ENCODE measurements at regions of chr6 and their contacts with region 1.

Region 1: DNA sequence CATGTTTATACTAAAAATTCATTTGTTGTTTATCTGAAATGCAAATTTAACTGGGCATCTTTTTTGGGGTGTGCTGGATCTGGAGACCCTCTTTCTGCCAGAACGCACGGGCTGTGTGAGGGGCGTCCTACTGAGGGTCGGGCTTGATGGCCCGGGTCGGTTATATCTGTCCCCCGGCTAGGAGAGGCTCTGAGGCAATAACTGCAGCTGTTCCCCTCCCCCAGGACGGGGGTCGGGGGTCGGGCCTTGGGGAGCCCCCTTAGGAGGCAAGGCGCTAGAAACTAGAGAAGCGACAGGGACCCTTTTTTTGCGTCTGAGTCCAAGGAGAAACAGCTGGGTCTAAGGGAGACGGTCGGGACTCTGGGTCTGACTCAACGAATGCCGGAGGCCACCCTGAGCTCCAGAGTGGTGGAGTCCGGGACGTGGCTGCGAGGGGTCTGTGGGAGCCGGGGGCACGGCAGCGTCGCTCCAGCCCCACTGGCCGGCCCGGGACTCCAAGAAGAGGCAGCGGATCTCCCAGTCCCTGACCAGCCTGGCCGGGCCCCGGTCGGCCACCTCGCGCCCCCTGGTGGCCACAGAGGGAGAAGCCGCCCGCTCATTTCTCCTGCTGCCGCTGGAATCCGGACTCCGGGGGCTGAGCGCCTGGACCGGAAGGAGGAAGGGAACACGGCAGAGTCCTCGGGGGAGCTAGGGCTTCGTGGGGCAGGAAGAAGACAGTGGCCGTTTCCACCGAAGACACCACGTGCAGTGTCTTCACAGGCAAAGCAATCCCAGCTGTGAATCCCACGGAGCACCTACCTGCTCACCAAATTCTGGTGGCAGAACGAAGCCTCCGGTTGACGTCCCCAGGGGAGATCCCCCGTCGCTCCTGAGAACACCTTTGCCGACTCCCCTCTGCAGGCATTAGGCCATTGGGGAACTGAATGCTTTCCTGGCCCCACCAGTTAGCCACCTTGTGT is 24.0 kb upstream of the SCML4 start:
- DNase-seq: peak; percentile 66 to 88 (median 76)
- ATAC-seq: peak; percentile 80
- H3K4me3 ChIP-seq: peak overlapping the region; percentile 61
- H3K4me3 Mint-ChIP-seq: peak overlapping the region; percentile 88
- H3K27ac ChIP-seq: no peak overlapping the region
- H3K27ac Mint-ChIP-seq: peak overlapping the region; percentile 83
- H3K4me1 ChIP-seq: peaks cover 22% of the 10 kb centered on the region
- H3K4me1 Mint-ChIP-seq: peaks cover 30% of the 10 kb centered on the region
- H3K27me3 ChIP-seq: no peaks in the 10 kb centered on the region
- H3K27me3 Mint-ChIP-seq: no peaks in the 10 kb centered on the region
- CTCF ChIP-seq: peak; percentile 96

Region 2: DNA sequence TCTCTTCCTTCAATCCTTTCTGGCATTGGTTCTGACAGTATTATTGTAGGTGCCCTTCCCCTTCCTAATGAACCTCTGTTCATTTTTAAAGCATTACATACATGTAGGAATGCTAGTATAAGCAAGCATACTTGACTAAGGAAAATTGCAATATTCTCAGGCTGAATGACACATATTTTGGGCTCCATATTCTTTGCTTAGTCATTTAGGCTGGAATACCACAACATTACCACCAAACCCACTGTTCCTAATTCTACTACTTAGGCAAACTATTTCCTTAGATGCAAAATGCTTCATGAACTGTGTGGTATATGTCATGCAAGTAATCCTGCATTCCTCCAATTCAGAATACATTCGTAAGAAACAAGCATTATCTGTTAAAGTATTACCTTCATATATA is 1648.1 kb before region 1 on chr6:
- CTCF ChIA-PET with region 1: no interaction called
- POLR2A ChIA-PET with region 1: no interaction called
- intact Hi-C with region 1: no loop called
- DNase-seq: no peak
- ATAC-seq: no peak
- H3K4me3 ChIP-seq: no peak overlapping the region
- H3K4me3 Mint-ChIP-seq: no peak overlapping the region
- H3K27ac ChIP-seq: no peak overlapping the region
- H3K27ac Mint-ChIP-seq: no peak overlapping the region
- H3K4me1 ChIP-seq: peaks cover 14% of the 10 kb centered on the region
- H3K4me1 Mint-ChIP-seq: peaks cover 35% of the 10 kb centered on the region
- H3K27me3 ChIP-seq: no peaks in the 10 kb centered on the region
- H3K27me3 Mint-ChIP-seq: no peaks in the 10 kb centered on the region
- CTCF ChIP-seq: no peak

Region 3: DNA sequence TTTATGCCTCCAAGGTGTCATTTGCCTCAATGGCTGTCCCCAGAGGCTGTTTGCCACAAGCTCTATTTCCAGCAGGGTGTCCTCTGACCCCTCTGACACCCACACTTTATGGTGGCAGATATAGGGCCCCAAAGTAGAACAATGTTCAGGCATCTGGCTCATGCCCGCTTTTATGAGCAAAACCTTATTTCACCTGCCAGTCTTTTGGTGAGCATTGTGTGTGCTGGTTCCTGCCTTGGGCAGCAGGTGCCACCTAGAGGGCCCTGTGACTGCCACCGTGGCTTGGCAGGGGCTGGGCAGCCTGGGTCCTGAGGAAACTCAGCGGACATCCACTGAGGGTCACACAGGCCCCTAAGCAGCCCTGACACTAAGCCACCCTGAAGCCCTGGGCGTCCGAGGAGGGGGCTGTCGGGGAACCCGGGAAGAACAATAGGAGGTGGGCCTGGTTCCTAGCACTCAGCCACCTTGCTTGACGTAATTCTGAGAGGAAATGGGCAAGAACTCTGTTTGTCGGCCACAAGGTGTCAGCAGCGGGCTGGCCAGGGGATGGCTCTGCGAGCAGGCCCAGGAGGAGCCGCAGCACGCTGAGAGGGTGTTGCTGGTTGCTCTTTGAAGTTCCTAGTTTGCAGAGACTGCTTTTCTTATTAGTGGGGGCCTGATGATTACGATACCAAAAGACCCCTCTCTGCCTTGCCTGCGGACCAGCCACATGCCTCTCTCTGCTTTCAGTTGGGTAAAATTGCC is 173.0 kb before region 1 on chr6:
- CTCF ChIA-PET with region 1: interaction called, 18 read pairs
- POLR2A ChIA-PET with region 1: interaction called, 4 read pairs
- intact Hi-C with region 1: loop called (anchors 1 kb)
- DNase-seq: peak; percentile 80 to 93 (median 86)
- ATAC-seq: peak; percentile 98
- H3K4me3 ChIP-seq: peak overlapping the region; percentile 18
- H3K4me3 Mint-ChIP-seq: peak overlapping the region; percentile 68
- H3K27ac ChIP-seq: peak overlapping the region in 1 of 2 donors; percentile 18
- H3K27ac Mint-ChIP-seq: peak overlapping the region; percentile 83
- H3K4me1 ChIP-seq: peaks cover 18% of the 10 kb centered on the region
- H3K4me1 Mint-ChIP-seq: peaks cover 14% of the 10 kb centered on the region
- H3K27me3 ChIP-seq: no peaks in the 10 kb centered on the region
- H3K27me3 Mint-ChIP-seq: no peaks in the 10 kb centered on the region
- CTCF ChIP-seq: peak; percentile 90

Region 4: DNA sequence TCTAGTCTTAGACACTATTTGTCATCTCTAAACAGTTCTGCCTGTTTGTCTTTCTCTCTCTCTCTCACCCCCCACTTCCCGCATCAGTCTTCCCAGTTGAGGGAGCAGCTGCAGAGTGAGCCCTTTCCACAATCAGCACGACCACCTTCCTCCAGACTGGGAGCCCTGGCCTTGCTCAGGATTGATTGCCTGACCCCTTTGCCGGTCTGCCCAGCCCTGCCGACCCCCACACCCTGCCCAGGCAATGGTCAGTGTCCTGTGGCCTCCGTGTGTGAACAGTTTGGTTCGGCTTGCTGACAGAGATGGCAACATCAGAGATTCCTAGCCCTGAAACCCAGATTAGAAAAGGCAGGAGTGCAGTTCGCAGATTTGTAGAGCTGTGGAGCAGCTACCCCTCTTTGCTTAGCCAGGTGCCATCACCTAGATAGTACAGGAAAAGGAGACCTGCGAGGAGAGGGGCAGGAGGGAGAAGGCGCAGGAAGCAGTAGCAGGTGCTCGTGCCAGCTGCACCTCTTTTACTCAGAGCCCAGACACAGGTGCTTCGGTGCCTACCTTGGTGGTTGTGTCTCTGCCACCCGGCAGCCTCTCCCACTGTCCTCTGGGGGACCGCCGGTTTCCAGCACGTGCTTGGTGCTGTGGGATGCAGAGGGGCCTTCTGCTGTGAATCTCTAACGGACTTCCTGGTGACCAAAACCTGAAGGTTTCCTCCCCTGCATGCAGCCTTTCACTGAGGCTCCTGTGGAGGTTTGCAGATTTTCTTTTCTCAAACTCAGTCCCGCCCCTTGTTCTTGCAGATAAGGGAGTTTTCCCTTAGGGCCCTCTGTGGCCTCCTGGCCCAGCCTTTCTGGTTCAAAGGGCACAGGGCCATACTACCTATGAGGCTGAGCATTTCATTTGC is 116.5 kb before region 1 on chr6:
- CTCF ChIA-PET with region 1: interaction called, 84 read pairs
- POLR2A ChIA-PET with region 1: interaction called, 31 read pairs
- intact Hi-C with region 1: loop called (anchors 1 kb)
- DNase-seq: peak in 12 of 14 experiments; percentile 25 to 68 (median 50)
- ATAC-seq: peak; percentile 58
- H3K4me3 ChIP-seq: peak overlapping the region; percentile 84
- H3K4me3 Mint-ChIP-seq: peak overlapping the region; percentile 94
- H3K27ac ChIP-seq: peak overlapping the region; percentile 59 to 79
- H3K27ac Mint-ChIP-seq: peak overlapping the region; percentile 93
- H3K4me1 ChIP-seq: peaks cover 81% of the 10 kb centered on the region
- H3K4me1 Mint-ChIP-seq: peaks cover 94% of the 10 kb centered on the region
- H3K27me3 ChIP-seq: no peaks in the 10 kb centered on the region
- H3K27me3 Mint-ChIP-seq: no peaks in the 10 kb centered on the region
- CTCF ChIP-seq: no peak

Region 5: DNA sequence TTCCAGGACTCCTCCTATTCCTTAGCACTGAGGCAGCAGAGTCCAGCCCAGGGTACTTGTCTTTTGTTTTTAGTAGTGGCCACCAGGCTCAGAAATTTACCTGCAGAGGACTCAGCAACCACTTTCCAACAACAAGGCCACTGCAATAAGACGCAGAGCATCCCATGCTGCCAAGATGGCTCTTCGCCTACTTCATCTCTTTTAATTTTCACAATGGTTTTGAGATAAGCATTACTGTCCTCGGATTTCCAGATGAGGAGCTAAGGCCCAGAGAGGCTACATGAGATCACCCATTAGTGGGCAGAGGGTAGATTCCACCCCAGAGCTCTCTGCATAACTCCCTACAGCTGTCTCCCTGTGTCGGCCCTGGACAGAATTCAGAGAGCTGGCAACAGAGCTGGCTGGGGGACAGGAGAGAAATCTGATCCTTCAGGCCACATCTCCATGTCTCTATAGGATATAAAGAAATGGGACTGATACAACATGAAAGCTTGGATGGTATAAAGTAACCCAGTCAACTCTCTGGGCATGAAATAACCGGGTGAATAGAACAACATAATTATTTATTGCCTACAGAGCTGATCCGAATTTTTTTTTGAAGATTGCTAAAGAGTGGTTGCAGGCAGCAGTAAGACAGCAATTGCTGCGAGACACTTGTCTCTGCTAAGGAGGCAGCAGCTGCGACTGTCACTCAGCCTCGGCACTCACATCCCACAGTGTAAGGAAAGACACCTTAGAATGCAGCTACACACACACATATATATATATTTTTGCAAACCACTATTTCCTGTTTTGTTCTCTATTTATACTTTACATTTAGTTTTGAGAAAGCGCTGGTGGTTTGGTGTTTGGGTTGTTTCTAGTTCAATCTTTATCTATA is 61.2 kb before region 1 on chr6:
- CTCF ChIA-PET with region 1: interaction called, 7 read pairs
- POLR2A ChIA-PET with region 1: interaction called, 21 read pairs
- intact Hi-C with region 1: loop called in 1 of 2 experiments (anchors 2 kb)
- DNase-seq: peak in 13 of 14 experiments; percentile 30 to 75 (median 52)
- ATAC-seq: peak; percentile 79
- H3K4me3 ChIP-seq: peak overlapping the region; percentile 0
- H3K4me3 Mint-ChIP-seq: peak overlapping the region; percentile 87
- H3K27ac ChIP-seq: peak overlapping the region; percentile 19 to 66
- H3K27ac Mint-ChIP-seq: peak overlapping the region; percentile 93
- H3K4me1 ChIP-seq: peaks cover 81% of the 10 kb centered on the region
- H3K4me1 Mint-ChIP-seq: peaks cover 87% of the 10 kb centered on the region
- H3K27me3 ChIP-seq: no peaks in the 10 kb centered on the region
- H3K27me3 Mint-ChIP-seq: no peaks in the 10 kb centered on the region
- CTCF ChIP-seq: no peak

Region 6: GRCh38 chr6:107866606-107867301 is 18.6 kb after region 1 on chr6:
- CTCF ChIA-PET with region 1: interaction called, 18 read pairs
- POLR2A ChIA-PET with region 1: interaction called, 8 read pairs
- intact Hi-C with region 1: no loop called
- DNase-seq: peak in 6 of 14 experiments; percentile 17 to 76 (median 60)
- ATAC-seq: peak; percentile 78
- H3K4me3 ChIP-seq: no peak overlapping the region
- H3K4me3 Mint-ChIP-seq: no peak overlapping the region
- H3K27ac ChIP-seq: no peak overlapping the region
- H3K27ac Mint-ChIP-seq: peak overlapping the region; percentile 13
- H3K4me1 ChIP-seq: peaks cover 3% of the 10 kb centered on the region
- H3K4me1 Mint-ChIP-seq: peaks cover 7% of the 10 kb centered on the region
- H3K27me3 ChIP-seq: no peaks in the 10 kb centered on the region
- H3K27me3 Mint-ChIP-seq: peaks cover 4% of the 10 kb centered on the region
- CTCF ChIP-seq: peak; percentile 79